ENCODE measurements at regions of chr20 and their contacts with region 1.

Region 1: DNA sequence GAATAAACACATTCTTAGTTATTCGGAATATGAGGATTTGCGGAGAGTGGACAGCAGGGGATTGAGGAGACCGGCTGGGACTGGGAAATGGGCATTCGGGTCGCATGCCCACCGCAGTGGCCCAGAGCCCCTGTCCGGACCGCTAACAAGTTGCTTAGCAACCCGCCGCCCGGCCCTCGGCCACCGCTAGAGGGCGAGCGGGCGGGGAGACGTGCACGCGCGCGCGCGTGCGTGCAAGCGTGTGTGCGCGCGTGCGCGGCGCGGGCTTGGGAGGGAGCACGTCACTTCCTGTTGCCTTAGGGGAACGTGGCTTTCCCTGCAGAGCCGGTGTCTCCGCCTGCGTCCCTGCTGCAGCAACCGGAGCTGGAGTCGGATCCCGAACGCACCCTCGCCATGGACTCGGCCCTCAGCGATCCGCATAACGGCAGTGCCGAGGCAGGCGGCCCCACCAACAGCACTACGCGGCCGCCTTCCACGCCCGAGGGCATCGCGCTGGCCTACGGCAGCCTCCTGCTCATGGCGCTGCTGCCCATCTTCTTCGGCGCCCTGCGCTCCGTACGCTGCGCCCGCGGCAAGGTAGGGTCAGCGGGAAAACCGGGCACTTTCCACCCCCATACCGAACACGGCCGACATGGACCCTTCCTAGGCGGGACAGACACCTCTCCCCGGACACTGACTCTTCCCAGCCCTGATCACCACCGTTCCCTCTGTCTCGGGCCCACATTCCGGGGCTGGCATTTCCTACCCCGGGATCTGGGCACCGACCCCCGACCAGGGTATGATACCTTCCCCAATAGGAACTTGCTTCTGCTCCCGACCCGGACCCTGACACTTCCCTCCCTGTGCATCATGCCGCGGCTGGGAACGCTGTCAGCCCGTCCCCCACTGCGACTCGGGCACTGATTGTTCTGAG is at the start of gene HM13:
- DNase-seq: peak; percentile 91
- H3K4me3 Mint-ChIP-seq: no peak within 1 kb of the TSS
- H3K27ac Mint-ChIP-seq: no peak within 1 kb of the TSS
- H3K4me1 Mint-ChIP-seq: no peaks in the 10 kb centered on the region
- H3K27me3 Mint-ChIP-seq: no peaks in the 10 kb centered on the region
- CTCF ChIP-seq: peak; percentile 97
- total RNA-seq, gene HM13: 276 and 338 TPM in 2 replicates

Region 2: GRCh38 chr20:31355981-31356380 is 158.4 kb before region 1 on chr20:
- CTCF ChIA-PET with region 1: no interaction called
- POLR2A ChIA-PET with region 1: no interaction called
- intact Hi-C with region 1: no loop called
- DNase-seq: no peak
- H3K4me3 Mint-ChIP-seq: no peak overlapping the region
- H3K27ac Mint-ChIP-seq: no peak overlapping the region
- H3K4me1 Mint-ChIP-seq: no peaks in the 10 kb centered on the region
- H3K27me3 Mint-ChIP-seq: peaks cover 16% of the 10 kb centered on the region
- CTCF ChIP-seq: no peak

Region 3: DNA sequence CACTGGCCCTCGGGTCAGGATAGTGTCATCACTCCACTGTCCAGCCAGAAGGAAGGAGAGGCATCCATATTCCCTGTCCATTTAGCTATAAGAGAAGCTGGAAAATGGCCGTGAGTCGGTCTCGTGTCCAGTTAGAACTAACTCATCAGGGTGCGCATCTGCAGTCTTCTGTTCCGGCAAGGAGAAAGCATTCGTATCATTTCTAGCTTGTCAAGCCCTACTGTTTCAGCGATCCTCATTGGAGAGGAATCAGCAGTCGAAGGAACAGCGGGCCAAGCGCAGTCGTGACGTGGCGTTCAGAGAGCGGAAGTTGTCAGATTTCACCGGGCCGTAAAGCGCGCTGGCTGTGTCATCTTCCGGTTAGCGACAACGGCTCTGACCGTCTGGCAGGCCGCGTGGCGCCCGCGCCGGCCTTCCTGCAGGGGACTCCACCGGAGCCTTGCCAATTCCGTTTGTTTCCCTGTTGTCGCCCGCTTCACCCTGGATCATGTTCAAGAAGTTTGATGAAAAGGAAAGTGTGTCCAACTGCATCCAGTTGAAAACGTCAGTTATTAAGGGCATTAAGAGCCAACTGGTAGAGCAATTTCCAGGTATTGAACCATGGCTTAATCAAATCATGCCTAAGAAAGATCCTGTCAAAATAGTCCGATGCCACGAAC is 32.7 kb after region 1 on chr20:
- CTCF ChIA-PET with region 1: interaction called, 10 read pairs
- POLR2A ChIA-PET with region 1: interaction called, 9 read pairs
- intact Hi-C with region 1: no loop called
- DNase-seq: peak; percentile 87
- H3K4me3 Mint-ChIP-seq: peak overlapping the region; percentile 82
- H3K27ac Mint-ChIP-seq: peak overlapping the region; percentile 97
- H3K4me1 Mint-ChIP-seq: peaks cover 14% of the 10 kb centered on the region
- H3K27me3 Mint-ChIP-seq: no peaks in the 10 kb centered on the region
- CTCF ChIP-seq: no peak

Region 4: DNA sequence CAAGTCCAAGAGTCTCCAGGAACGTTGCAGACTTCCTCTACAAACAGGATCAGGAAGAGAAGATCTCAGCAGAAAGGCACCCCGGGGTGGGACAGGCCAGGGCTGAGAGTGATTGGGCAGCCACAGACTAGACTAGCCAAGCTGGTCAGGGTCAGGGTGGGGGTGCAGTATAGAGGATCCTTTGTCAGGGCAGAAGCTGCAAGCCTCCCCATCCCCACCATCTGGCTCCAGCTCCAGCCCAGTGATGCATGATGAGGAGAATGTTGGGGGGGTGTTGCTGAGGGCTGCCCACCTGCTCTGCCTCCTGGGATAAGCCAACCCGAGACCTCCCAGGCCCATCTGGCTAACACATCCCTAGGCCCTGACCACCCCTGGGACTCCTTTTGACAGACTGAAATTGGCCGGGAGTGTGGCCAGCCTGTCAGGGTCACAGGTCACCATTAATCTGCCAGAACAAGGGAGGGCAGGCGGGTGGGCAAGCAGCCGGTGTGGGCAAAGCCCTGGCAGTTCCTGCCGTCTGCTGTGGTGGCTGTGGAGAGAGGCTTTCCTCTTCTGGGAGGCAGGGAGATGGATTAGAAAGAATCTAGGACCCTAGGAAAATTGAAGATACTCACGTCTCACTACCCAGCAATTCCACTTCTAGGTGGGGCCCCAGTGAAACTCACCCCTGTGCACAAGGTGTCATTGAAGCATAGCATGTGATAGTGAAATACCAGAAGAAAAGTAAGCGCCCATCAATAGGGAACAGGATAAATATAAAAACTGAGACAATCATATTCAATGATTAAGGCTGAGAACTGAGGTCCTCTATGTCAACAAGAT is 1951.3 kb after region 1 on chr20:
- CTCF ChIA-PET with region 1: no interaction called
- POLR2A ChIA-PET with region 1: no interaction called
- intact Hi-C with region 1: no loop called
- DNase-seq: no peak
- H3K4me3 Mint-ChIP-seq: no peak overlapping the region
- H3K27ac Mint-ChIP-seq: no peak overlapping the region
- H3K4me1 Mint-ChIP-seq: no peaks in the 10 kb centered on the region
- H3K27me3 Mint-ChIP-seq: no peaks in the 10 kb centered on the region
- CTCF ChIP-seq: no peak

Measured in MCF 10A (cell line).